ENCODE measurements at regions of chr1 and their contacts with region 1.

Region 1: GRCh38 chr1:156319664-156320063 is 18.4 kb downstream of the CCT3 start:
- DNase-seq: peak; percentile 51
- H3K4me3 Mint-ChIP-seq: no peak overlapping the region
- H3K27ac Mint-ChIP-seq: no peak overlapping the region
- H3K4me1 Mint-ChIP-seq: peaks cover 5% of the 10 kb centered on the region
- H3K27me3 Mint-ChIP-seq: no peaks in the 10 kb centered on the region
- CTCF ChIP-seq: peak; percentile 58

Region 2: DNA sequence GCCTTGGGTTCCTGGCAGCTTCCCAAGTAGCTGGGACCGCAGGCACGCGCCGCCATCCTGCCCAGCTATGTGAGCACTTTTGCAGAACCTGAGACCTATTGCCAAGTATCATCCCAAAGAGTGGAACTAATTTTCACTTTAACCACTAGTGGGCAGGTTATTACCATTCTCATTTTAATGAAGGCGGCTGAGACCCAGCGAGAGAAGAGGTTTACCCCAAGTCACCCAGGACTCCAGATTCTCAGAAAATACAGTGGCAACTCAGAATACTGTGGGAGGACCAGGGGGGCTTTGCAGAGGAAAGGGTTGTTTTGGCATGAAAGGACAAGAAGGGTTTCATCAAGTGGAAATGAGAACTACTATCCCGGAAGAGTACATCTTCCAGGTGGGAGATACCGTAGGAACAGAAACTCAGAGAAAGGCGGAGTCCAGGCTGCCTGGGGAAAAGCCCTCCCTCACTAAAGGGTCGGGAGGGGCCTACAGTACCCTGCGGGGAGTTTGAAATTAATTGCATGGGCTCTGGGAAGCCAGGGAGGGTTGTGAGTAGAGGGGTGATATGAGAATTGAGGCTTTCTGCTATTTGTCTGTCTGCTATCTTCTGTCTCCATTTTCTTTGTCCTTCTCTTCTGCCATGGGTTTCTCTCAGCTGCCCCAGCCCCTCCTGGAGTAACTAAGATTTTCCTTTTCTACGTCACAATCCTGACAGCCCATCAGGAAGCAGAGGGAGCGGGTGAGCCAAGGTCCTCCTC is 173.5 kb before region 1 on chr1:
- CTCF ChIA-PET with region 1: interaction called, 6 read pairs
- POLR2A ChIA-PET with region 1: no interaction called
- intact Hi-C with region 1: loop called (anchors 1 kb)
- DNase-seq: peak; percentile 97
- H3K4me3 Mint-ChIP-seq: peak overlapping the region; percentile 24
- H3K27ac Mint-ChIP-seq: no peak overlapping the region
- H3K4me1 Mint-ChIP-seq: peaks cover 29% of the 10 kb centered on the region
- H3K27me3 Mint-ChIP-seq: no peaks in the 10 kb centered on the region
- CTCF ChIP-seq: peak; percentile 60

Region 3: GRCh38 chr1:156276966-156277381 is 42.7 kb before region 1 on chr1:
- CTCF ChIA-PET with region 1: interaction called, 72 read pairs
- POLR2A ChIA-PET with region 1: interaction called, 17 read pairs
- intact Hi-C with region 1: loop called (anchors 5 kb)
- DNase-seq: peak; percentile 88
- H3K4me3 Mint-ChIP-seq: no peak overlapping the region
- H3K27ac Mint-ChIP-seq: peak overlapping the region; percentile 36
- H3K4me1 Mint-ChIP-seq: peaks cover 32% of the 10 kb centered on the region
- H3K27me3 Mint-ChIP-seq: no peaks in the 10 kb centered on the region
- CTCF ChIP-seq: no peak

Region 4: GRCh38 chr1:156303241-156303640 is 16.4 kb before region 1 on chr1:
- CTCF ChIA-PET with region 1: interaction called, 24 read pairs
- POLR2A ChIA-PET with region 1: interaction called, 8 read pairs
- intact Hi-C with region 1: no loop called
- DNase-seq: no peak
- H3K4me3 Mint-ChIP-seq: no peak overlapping the region
- H3K27ac Mint-ChIP-seq: no peak overlapping the region
- H3K4me1 Mint-ChIP-seq: peaks cover 11% of the 10 kb centered on the region
- H3K27me3 Mint-ChIP-seq: no peaks in the 10 kb centered on the region
- CTCF ChIP-seq: no peak